Ovary (tissue), 10 donors: ENCODE measurements at regions of chr16 and their contacts with region 1.

Region 1: GRCh38 chr16:22694887-22695382 is 119.0 kb upstream of the HS3ST2 start:
- DNase-seq: no peak
- H3K4me3 ChIP-seq: no peak overlapping the region
- H3K27ac ChIP-seq: no peak overlapping the region
- H3K4me1 ChIP-seq: peaks cover 1% of the 10 kb centered on the region
- H3K27me3 ChIP-seq: no peaks in the 10 kb centered on the region
- CTCF ChIP-seq: no peak
- EP300 ChIP-seq: no peak
- POLR2A ChIP-seq: no peak

Region 2: DNA sequence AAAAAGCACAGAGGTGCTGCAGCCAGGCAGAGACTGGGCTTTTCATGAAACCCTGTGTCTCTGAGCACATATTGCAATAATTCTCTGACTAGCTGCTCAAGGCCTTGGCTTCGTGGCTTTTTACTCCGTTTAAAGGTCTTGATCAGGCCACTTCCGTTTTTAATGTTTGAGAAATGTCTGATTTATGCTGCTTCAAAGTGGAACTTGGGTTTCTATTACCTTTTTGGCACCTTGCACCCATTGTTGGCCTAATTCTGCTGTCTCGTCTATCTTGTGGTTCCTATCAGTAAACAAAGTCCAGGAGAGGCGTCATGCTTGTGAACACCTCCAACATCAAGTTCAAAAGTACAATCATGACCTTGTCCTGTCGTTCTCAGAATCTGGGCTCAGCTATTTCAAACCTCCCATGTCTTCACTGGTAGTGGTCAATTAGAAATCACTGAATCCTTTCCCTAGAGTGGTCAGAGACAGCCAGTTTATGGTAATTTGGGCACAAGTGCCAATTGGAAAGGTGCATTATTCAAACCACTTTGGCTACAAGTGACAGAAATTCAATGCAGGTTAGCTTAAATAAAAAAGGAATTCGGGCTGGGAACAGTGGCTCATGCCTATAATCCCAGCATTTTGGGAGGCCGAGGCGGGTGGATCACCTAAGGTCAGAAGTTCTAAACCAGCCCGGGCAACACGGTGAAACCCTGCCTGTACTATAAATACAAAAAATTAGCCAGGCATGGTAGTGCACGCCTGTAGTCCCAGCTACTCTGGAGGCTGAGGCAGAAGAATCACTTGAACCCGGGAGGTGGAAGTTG is 1128.9 kb before region 1 on chr16:
- intact Hi-C with region 1: loop called in 1 of 4 experiments (anchors 5 kb)
- DNase-seq: no peak
- H3K4me3 ChIP-seq: no peak overlapping the region
- H3K27ac ChIP-seq: no peak overlapping the region
- H3K4me1 ChIP-seq: no peaks in the 10 kb centered on the region
- H3K27me3 ChIP-seq: no peaks in the 10 kb centered on the region
- CTCF ChIP-seq: no peak
- EP300 ChIP-seq: no peak
- POLR2A ChIP-seq: no peak

Region 3: DNA sequence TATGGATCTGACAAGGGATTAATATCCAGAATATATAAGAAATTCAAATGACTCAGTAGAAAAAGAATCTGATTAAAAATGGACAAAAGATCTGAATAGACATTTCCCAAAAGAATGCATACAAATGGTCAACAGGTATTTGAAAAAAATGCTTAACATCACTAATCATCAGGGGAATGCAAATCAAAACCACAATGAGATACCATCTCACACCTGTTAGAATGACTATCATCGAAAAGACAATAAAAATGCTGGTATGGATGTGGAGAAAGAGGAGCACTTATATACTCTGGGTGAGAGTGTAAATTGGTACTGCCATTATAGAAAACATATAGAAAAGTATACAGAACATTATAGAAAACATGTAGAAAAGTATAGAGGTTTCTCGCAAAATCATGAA is 102.6 kb after region 1 on chr16:
- intact Hi-C with region 1: no loop called
- DNase-seq: no peak
- H3K4me3 ChIP-seq: no peak overlapping the region
- H3K27ac ChIP-seq: no peak overlapping the region
- H3K4me1 ChIP-seq: no peaks in the 10 kb centered on the region
- H3K27me3 ChIP-seq: no peaks in the 10 kb centered on the region
- CTCF ChIP-seq: no peak
- EP300 ChIP-seq: no peak
- POLR2A ChIP-seq: no peak